ENCODE measurements at regions of chr12 and their contacts with region 1.

Region 1: DNA sequence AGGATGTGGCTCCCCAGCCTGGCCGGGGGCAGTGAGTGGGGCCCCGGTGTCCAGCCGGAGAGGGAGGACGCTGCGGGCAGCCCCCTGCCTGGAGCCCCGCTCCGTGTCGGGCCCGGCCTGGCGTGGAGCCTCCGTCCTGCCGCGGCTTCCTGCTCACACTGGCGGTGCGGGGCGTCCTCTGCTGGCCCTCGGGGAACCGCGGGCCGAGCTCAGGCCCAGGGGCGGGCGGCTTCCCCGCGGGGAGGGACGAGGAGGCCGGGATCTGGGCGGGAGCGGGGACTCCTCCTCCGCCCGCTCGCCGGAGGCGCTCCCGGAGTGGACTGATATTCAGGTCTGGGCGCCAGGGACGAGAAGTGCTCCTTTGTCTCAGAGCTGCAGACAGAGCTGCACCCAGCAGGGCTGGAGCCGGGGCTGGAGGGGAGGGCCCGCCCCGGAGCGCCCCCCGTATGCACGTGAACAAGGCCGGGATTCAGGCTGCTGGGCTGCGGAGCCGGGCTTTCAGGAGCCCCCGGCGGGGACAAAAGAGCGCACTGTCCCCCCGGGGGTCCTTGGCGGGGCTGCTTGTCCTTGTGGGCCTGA is 2.2 kb downstream of the MMP17 start:
- DNase-seq: peak; percentile 67 to 91
- H3K4me3 ChIP-seq: peak overlapping the region; percentile 56
- H3K27ac ChIP-seq: no peak overlapping the region
- H3K4me1 ChIP-seq: peaks cover 21% of the 10 kb centered on the region
- H3K27me3 ChIP-seq: peaks cover 18% of the 10 kb centered on the region
- CTCF ChIP-seq: peak; percentile 60

Region 2: DNA sequence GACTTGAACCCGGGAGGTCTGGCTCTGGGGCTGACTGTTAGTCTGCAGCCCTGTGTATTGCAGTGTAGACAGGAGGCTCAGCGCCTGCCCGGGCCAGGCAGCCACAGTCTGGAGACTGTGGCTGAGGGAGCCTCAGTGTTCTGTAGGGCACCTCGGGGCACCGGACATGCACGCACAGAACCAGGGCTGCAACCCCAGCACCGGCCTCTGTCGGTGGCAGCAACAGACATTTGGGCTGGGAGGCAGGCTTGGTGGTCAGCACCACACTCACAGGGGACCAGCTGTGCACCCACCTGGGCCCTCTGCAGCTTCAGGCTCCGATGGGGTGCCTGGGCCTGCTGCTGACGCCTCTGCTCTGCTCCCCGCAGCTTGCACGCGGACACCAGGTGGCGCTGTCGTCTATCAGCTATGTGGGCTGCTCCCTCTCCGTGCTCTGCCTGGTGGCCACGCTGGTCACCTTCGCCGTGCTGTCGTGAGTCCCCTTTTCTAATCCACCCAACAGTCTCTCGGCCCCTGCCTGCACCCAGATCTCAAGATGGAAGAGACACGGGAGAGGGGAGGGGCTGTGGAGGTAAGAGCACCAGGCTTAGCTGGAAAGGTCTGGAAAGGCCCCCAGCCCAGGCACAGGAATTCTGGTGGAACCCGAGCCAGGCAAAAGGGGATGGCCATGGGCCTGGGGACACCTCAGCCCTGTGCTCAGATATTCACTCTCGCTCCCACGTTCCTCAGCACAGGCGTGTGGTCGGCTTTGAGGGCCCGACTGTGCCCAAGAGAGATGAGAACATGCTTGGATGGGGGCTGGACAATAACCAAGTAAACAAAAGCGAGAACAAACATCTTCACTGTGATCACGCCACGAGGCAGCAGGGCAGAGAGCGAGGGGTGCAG is 725.7 kb before region 1 on chr12:
- CTCF ChIA-PET with region 1: no interaction called
- POLR2A ChIA-PET with region 1: no interaction called
- intact Hi-C with region 1: loop called (anchors 2 kb)
- DNase-seq: peak in 1 of 2 experiments; percentile 73
- H3K4me3 ChIP-seq: no peak overlapping the region
- H3K27ac ChIP-seq: no peak overlapping the region
- H3K4me1 ChIP-seq: no peaks in the 10 kb centered on the region
- H3K27me3 ChIP-seq: peaks cover 69% of the 10 kb centered on the region
- CTCF ChIP-seq: peak; percentile 83

Region 3: DNA sequence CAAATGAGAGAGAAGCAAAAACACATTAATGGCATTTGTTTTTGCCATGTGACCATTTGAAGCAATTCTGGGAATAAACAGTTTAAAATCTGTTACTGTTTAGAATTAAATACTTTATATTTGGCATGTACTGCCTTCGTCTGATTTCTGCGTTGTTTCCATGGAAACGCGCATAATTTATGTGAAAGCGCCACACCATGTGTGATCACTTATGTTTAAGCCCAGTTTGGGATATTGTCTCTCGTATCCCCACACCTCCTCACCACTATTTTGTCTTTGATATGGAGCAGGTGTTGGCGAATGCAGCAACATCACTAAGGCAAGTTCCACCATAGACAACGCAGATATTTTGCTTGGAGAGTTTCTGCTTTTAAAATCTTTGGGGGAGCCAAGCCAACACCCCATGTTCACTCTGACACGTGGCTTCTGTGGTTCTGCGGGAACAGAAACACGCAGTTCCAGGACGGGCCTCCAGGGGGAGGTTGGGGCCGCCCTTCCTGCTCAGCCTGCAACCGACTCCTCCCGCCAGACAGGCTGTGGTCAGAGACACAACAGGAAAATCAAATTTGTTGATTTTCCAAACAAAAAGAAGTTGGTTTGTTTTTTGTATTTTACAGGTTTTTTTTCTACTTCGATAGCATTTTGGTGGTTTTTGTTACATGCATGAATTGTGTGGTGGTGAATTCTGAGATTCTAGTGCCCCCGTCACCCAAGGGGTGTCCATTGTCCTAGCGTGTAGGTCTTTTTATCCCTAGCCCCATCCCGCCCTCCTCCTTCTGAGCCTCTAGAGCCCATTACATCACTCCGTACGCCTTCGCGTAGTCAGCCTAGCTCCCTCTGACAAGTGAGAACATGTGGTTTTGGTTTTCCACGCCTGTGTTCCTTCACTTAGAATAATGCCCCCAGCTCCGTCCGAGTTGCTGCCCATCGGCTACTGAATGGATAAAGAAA is 221.4 kb before region 1 on chr12:
- CTCF ChIA-PET with region 1: no interaction called
- POLR2A ChIA-PET with region 1: no interaction called
- intact Hi-C with region 1: loop called (anchors 10 kb)
- DNase-seq: peak in 1 of 2 experiments; percentile 30
- H3K4me3 ChIP-seq: no peak overlapping the region
- H3K27ac ChIP-seq: no peak overlapping the region
- H3K4me1 ChIP-seq: no peaks in the 10 kb centered on the region
- H3K27me3 ChIP-seq: peaks cover 100% of the 10 kb centered on the region
- CTCF ChIP-seq: peak; percentile 79

Region 4: DNA sequence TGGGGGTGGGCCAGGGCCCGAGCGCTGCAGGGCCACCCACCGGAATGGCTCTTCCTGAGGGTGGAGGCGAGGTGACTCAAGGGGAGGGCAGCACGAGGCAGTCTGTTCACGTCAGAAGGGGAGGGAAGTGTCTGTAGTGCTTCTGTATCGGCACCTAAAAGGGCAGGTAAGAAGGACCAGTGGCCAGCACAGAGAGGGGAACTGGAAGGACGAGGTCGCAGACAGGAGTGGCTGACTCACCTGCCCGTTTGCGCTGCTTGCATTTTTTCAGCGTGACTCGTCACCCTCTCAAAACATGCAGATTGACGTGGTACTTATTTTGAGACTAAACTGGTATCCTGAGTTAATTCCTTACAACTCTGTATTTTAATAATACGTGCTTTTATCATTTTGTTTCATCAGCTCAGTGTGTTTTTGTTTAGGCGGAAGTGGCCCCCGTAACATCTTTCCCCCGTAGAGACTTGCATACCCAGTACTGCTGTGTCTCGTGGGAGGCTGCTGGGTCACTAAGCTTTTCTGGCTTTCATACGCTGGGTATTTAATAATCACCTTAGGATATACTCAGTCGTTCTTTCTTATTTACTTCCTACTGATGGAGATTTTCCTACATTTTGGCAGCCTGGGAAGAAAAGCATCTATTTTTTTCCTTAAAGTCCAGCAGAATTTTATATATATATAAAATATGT is 93.1 kb before region 1 on chr12:
- CTCF ChIA-PET with region 1: no interaction called
- POLR2A ChIA-PET with region 1: no interaction called
- intact Hi-C with region 1: loop called (anchors 2 kb)
- DNase-seq: peak; percentile 89 to 98
- H3K4me3 ChIP-seq: peak overlapping the region; percentile 50
- H3K27ac ChIP-seq: peak overlapping the region; percentile 80
- H3K4me1 ChIP-seq: peaks cover 23% of the 10 kb centered on the region
- H3K27me3 ChIP-seq: no peaks in the 10 kb centered on the region
- CTCF ChIP-seq: no peak

Region 5: DNA sequence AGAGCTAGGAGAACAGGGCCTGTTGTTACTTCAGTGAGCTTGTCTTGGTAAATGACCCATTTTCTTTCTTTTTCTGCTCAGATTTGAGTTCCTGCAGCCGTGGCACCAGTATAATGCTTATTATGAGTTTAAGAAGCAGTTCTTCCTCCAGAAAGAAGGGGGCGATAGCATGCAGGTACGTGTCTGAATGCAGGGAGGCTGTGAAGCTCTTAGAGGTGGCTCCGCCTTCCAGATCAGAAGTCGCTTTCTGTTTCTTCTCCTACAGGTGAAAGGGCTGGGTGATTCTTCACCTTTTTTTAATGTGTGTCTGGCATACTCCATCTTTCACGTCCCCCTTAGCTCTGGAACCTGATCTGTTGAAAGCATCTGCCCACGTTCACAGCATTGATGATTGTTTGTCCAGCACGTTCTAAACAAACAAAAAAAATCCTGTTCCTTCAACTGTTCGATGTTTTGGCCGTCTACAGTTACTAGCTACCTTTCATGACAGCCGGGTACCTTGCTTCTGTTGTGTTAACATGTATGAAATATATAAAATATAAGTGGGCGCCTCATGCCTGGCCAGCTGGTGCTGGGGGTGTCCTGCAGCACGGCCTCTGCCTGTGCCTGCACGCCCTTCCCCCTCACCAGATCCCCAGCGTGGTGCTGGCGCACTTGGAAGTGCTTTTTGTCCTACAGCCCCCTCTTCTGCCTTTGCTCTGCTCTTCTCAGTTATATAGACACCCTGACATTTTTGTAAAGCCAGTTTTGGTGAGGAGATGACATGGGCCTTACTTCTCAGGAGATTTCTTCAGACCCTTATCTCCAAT is 74.9 kb before region 1 on chr12:
- CTCF ChIA-PET with region 1: interaction called, 13 read pairs
- POLR2A ChIA-PET with region 1: no interaction called
- intact Hi-C with region 1: no loop called
- DNase-seq: peak; percentile 6 to 60
- H3K4me3 ChIP-seq: no peak overlapping the region
- H3K27ac ChIP-seq: no peak overlapping the region
- H3K4me1 ChIP-seq: no peaks in the 10 kb centered on the region
- H3K27me3 ChIP-seq: no peaks in the 10 kb centered on the region
- CTCF ChIP-seq: peak; percentile 58

Region 6: DNA sequence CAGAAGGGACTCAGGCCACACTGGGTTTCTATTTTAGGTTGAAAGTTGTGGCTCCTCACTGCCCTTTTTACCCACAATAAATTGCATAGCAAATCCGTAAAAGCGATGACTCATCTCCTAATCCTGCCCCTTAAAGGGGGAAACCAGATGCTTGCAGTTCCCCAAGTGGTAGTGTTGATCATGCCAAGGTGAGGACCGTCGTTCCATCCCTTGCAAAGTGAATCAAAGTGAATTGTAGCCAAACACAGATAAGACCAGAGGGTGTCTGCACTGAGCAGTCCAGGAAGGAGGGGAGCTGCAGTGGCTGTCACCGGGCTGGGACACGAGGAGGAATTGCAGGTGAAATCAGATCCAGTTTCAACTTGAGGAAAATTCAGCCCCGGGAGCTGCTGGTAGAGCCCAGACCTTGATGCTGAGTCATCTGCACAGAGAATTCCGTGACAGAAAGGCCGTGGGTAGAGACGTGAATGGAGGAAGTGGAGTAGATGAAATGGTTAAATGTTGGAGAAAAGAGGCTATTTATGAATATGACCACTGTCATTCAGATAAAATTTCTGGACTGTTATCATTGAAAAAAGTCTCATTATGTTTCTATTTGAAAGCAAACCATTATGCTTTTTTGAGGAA is 46.4 kb before region 1 on chr12:
- CTCF ChIA-PET with region 1: no interaction called
- POLR2A ChIA-PET with region 1: interaction called, 8 read pairs
- intact Hi-C with region 1: loop called (anchors 2 kb)
- DNase-seq: peak; percentile 71 to 84
- H3K4me3 ChIP-seq: peak overlapping the region; percentile 44; the same call in 1 of the 2 replicates
- H3K27ac ChIP-seq: peak overlapping the region; percentile 80
- H3K4me1 ChIP-seq: peaks cover 30% of the 10 kb centered on the region
- H3K27me3 ChIP-seq: no peaks in the 10 kb centered on the region
- CTCF ChIP-seq: no peak

Region 7: DNA sequence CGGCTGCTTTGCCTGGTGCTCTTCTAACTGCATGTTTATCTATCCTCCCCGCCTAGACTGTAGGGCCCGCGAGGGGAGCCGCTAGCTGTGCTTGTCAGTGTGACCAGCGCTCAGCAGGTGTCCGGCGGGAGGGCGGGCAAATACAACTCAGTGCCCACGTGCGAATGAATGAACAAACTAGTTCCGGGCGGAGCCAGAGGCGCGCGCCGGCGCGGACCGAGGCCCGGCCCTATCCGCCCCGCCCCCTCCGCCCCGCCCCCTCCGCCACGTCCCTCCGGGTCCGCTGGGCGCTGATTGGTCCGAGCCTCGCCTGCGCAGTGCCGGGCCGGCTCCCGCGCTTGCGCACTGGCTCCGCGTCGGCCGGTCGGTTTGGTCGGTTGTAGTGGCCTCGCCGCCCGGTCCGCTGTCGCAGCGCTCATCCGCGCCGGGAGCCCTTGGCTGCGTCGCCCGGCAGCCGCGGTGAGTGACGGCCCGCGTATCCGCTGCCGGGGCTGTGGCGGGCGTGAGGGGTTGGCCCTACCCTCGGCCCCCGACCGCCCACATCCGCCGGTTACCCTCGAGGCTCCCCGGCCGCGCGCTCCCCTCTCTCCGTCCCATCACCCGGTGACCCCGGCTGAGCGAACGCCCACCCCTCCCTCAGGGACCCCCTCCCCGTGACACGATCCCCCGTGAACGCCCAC is 253.7 kb after region 1 on chr12:
- CTCF ChIA-PET with region 1: no interaction called
- POLR2A ChIA-PET with region 1: no interaction called
- intact Hi-C with region 1: loop called (anchors 5 kb)
- DNase-seq: peak; percentile 87 to 90
- H3K4me3 ChIP-seq: peak overlapping the region; percentile 76
- H3K27ac ChIP-seq: peak overlapping the region; percentile 59
- H3K4me1 ChIP-seq: peaks cover 15% of the 10 kb centered on the region
- H3K27me3 ChIP-seq: no peaks in the 10 kb centered on the region
- CTCF ChIP-seq: no peak